Sigmoid colon (tissue), 7 donors: ENCODE measurements at regions of chr1 and their contacts with region 1.

Region 1: GRCh38 chr1:109910123-109910962 is at the start of gene CSF1:
- DNase-seq: peak; percentile 95
- H3K4me3 ChIP-seq: peak within 1 kb of the TSS; percentile 83 to 92 (median 88)
- H3K27ac ChIP-seq: peak within 1 kb of the TSS; percentile 78 to 91 (median 88)
- H3K4me1 ChIP-seq: peaks cover 0 to 54% (median 49%) of the 10 kb centered on the region in 4 donors
- H3K27me3 ChIP-seq: no peaks in the 10 kb centered on the region
- CTCF ChIP-seq: no peak
- EP300 ChIP-seq: peak in 1 of 4 donors; percentile 33
- POLR2A ChIP-seq: peak; percentile 29 to 60
- total RNA-seq, gene CSF1: 21.8 to 118 (median 47.5) TPM

Region 2: DNA sequence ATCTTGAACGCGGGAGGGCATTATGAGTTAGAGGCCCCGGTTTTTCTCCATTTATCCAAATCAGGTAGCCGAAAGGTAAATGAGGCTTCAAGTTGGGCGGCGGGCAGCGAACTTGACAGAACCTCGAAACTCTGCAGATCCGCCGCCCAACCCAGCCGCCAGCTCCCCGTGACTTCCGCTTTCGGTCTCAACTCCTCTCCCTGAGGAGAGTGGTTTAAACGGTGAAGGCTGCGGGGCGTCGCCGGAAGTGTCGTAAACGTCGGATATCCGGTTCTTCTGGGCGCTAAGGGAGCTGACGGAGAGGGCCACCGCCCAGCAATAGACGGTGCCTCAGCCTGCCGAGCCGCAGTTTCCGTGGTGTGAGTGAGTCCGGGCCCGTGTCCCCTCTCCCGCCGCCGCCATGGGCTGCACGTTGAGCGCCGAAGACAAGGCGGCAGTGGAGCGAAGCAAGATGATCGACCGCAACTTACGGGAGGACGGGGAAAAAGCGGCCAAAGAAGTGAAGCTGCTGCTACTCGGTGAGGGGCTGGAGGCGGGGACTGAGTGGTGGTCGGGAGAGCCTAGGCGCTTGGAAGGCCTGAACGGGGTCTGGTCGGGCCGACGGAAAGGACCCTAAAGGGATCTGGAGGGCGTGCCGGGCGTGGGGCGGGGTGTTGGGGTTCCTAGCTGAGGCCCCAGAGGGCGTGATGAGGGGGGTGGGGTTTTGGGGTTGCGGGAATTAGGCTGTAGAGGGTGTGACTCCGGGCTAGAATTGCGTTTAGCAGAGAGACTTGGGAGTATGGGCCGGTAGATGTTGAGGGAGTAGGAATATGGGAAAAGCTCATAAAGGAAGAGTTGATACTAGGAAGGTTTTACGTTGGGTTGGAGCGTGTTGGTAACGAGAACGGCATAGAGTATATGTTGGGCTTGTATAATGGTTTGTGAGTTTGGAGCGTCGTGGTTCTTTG is 361.7 kb before region 1 on chr1 and contains the start of gene GNAI3:
- intact Hi-C with region 1: loop called (anchors 5 kb)
- DNase-seq: peak; percentile 98
- H3K4me3 ChIP-seq: peak within 1 kb of the TSS; percentile 72 to 94 (median 89)
- H3K27ac ChIP-seq: peak within 1 kb of the TSS; percentile 92 to 97 (median 95)
- H3K4me1 ChIP-seq: peaks cover 0 to 54% (median 40%) of the 10 kb centered on the region in 4 donors
- H3K27me3 ChIP-seq: no peaks in the 10 kb centered on the region
- CTCF ChIP-seq: no peak
- EP300 ChIP-seq: peak in 2 of 4 donors; percentile 6 to 33
- POLR2A ChIP-seq: peak; percentile 96 to 99
- total RNA-seq, gene GNAI3: 5.7 to 6.4 (median 6.1) TPM

Region 3: GRCh38 chr1:109773146-109773899 is 137.0 kb before region 1 on chr1:
- intact Hi-C with region 1: loop called (anchors 5 kb)
- DNase-seq: peak; percentile 94
- H3K4me3 ChIP-seq: no peak overlapping the region
- H3K27ac ChIP-seq: no peak overlapping the region
- H3K4me1 ChIP-seq: peaks cover 0 to 18% (median 9%) of the 10 kb centered on the region in 4 donors
- H3K27me3 ChIP-seq: no peaks in the 10 kb centered on the region
- CTCF ChIP-seq: peak; percentile 80 to 96 (median 88)
- EP300 ChIP-seq: no peak
- POLR2A ChIP-seq: no peak

Region 4: DNA sequence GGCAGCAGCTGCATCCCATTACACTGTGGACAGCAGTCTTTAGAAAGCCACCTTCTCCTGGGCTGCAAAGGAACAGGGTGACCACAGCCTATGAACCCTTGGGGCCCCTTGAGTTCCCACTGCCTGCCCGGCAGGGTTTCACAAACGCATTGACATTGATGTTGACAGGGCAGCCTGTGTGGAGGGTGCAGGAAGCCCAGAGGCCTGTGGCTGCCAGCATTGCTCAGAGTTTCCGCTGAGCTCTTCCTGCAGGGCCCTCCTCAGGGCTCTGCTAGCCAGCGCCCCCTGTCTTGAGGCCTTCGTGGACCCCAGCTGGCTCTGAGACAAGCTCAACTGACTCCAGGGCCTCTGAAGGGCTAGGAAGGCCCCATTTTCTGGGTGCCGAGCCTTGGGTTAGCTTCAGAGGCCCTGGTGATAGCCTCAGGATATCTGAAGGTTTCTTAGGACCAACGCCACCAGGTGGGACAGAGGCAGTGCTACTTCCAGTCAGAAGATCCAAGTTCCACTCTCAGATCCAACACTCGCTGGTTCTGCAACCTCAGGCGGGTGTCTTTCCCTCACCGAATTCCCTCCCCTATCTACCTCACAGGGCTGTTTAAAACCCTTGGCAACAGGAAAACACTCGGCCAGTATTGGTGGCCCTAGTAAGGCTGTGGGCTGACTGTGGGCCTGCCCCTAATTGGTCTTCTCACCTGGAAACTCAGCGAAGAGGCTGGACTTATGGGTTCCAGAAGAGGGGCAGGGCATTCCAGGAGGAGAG is 119.4 kb before region 1 on chr1:
- intact Hi-C with region 1: loop called (anchors 5 kb)
- DNase-seq: peak; percentile 61
- H3K4me3 ChIP-seq: no peak overlapping the region
- H3K27ac ChIP-seq: peak overlapping the region in 2 of 4 donors; percentile 1 to 37
- H3K4me1 ChIP-seq: peaks cover 0 to 44% (median 38%) of the 10 kb centered on the region in 4 donors
- H3K27me3 ChIP-seq: no peaks in the 10 kb centered on the region
- CTCF ChIP-seq: no peak
- EP300 ChIP-seq: no peak
- POLR2A ChIP-seq: no peak

Region 5: DNA sequence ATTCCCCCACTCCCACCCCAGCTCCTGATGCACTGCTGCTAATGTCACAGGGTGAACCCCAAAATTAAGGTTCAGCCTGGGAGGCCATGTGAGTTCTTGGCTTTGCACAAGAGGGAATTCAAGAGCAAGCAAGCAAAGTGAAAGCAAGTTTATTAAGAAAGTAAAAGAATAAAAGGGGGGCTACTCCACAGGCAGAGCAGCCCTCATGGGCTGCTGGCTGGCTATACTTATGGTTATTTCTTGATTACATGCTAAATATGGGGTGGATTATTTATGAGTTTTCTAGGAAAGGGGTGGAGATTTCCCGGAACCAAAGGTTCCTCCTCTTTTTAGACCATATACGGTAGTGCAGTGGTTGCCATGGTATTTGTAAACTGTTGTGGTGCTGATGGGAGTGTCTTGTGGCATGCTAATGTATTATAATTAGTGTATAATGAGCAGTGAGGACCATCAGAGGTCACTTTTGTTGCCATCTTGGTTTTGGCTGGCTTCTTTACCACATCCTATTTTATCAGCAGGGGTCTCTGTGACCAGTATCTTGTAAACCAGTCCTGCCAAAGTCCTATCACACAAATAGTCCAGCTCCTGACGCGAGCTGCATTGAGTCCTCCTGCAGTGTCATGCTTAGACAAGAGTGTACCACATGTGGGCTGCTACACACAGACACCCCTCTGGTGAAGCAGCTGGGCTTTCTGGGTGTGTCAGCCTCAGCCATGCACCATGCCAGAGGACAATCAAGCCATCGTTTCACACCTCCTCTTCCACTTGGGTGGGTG is 46.1 kb before region 1 on chr1:
- intact Hi-C with region 1: loop called (anchors 2 kb)
- DNase-seq: no peak
- H3K4me3 ChIP-seq: no peak overlapping the region
- H3K27ac ChIP-seq: peak overlapping the region; percentile 42 to 73 (median 60)
- H3K4me1 ChIP-seq: peaks cover 0 to 30% (median 26%) of the 10 kb centered on the region in 4 donors
- H3K27me3 ChIP-seq: no peaks in the 10 kb centered on the region
- CTCF ChIP-seq: no peak
- EP300 ChIP-seq: no peak
- POLR2A ChIP-seq: no peak

Region 6: GRCh38 chr1:109877320-109877771 is 33.0 kb before region 1 on chr1:
- intact Hi-C with region 1: loop called (anchors 2 kb)
- DNase-seq: peak; percentile 92
- H3K4me3 ChIP-seq: peak overlapping the region in 1 of 4 donors; percentile 4
- H3K27ac ChIP-seq: peak overlapping the region; percentile 74 to 86 (median 80)
- H3K4me1 ChIP-seq: peaks cover 0 to 38% (median 30%) of the 10 kb centered on the region in 4 donors
- H3K27me3 ChIP-seq: no peaks in the 10 kb centered on the region
- CTCF ChIP-seq: peak in 2 of 4 experiments; percentile 13 to 21
- EP300 ChIP-seq: no peak
- POLR2A ChIP-seq: no peak

Region 7: DNA sequence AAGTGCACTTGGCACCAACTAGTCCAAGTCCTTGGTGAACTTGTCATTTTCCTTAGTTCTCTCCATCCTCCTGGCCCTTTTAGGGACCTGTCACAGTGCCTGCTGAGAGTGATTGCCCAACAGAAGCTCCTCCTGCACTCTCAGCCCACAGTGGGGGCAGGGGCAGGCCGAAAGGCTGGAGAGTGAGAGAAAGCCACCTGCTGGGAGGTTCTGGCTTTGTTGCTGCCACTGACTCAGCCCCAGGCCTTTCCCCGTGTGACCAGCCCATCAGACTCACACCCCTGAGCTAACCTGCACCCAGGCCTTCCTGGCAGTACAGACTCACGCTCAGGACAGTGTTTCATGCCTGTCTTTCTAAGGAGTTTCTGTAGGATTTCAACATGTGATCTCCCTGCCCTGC is 523.5 kb after region 1 on chr1:
- intact Hi-C with region 1: no loop called
- DNase-seq: no peak
- H3K4me3 ChIP-seq: no peak overlapping the region
- H3K27ac ChIP-seq: no peak overlapping the region
- H3K4me1 ChIP-seq: no peaks in the 10 kb centered on the region
- H3K27me3 ChIP-seq: peaks cover 0 to 7% (median 0%) of the 10 kb centered on the region in 3 donors
- CTCF ChIP-seq: no peak
- EP300 ChIP-seq: no peak
- POLR2A ChIP-seq: no peak